Aorta (tissue), 5 donors: ENCODE measurements at regions of chr11 and their contacts with region 1.

Region 1: GRCh38 chr11:124586238-124586860 is 16.6 kb downstream of the OR8A1 start:
- DNase-seq: peak; percentile 65 to 80
- ATAC-seq: no peak
- H3K4me3 ChIP-seq: no peak overlapping the region
- H3K27ac ChIP-seq: no peak overlapping the region
- H3K4me1 ChIP-seq: no peaks in the 10 kb centered on the region
- H3K27me3 ChIP-seq: no peaks in the 10 kb centered on the region

Region 2: DNA sequence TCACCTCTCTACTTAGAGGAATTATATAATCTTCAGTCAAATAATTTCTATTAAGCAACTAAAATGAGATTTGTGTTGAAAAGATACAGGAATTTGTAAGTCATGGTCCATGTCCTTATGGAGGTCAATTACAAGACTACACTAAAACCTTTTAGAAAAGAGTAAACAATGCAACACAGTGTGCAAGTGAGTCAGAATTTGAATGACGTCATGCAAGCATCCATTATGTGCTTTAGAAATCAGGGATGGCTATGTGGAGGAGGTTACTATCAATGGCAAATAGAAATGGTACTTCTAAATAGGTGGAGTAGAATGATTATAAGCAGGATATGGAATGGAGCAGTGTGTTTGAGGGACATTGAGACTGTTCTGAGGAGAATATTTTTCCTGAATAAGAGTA is 386.6 kb before region 1 on chr11:
- intact Hi-C with region 1: no loop called
- DNase-seq: no peak
- ATAC-seq: no peak
- H3K4me3 ChIP-seq: no peak overlapping the region
- H3K27ac ChIP-seq: no peak overlapping the region
- H3K4me1 ChIP-seq: no peaks in the 10 kb centered on the region
- H3K27me3 ChIP-seq: no peaks in the 10 kb centered on the region

Region 3: GRCh38 chr11:124409906-124410305 is 176.4 kb before region 1 on chr11:
- intact Hi-C with region 1: loop called (anchors 5 to 10 kb)
- DNase-seq: no peak
- ATAC-seq: no peak
- H3K4me3 ChIP-seq: no peak overlapping the region
- H3K27ac ChIP-seq: no peak overlapping the region
- H3K4me1 ChIP-seq: no peaks in the 10 kb centered on the region
- H3K27me3 ChIP-seq: no peaks in the 10 kb centered on the region

Region 4: DNA sequence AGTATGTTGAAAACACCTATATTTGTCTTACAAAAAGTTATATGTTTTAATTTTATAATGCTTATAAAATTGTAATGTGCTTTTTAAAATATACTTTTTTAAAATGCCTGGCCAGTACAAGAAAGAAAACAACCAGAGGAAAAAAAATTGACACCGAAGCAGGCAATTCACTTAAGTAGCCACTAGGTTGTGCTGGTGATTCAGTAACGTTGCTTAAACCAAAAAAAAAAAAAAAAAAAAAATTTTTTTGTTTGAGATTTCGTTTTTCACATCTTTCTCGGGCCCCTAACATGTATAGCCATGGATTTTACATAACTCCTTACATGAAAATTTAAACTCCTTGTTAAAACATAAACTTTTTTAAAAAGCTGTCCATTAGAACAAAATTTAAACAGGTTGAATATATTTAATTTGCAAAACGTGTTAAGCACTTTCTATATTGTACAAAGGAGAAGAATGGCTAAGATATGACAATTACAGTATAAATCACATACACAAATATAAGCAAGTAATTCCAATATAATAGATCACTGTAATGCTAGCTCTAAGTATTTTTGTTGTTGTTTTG is 170.9 kb before region 1 on chr11:
- intact Hi-C with region 1: loop called (anchors 5 to 10 kb)
- DNase-seq: no peak
- ATAC-seq: no peak
- H3K4me3 ChIP-seq: no peak overlapping the region
- H3K27ac ChIP-seq: no peak overlapping the region
- H3K4me1 ChIP-seq: no peaks in the 10 kb centered on the region
- H3K27me3 ChIP-seq: no peaks in the 10 kb centered on the region